A549 (cell line): ENCODE measurements at regions of chr17 and their contacts with region 1.

Region 1: GRCh38 chr17:17890773-17891759 is 54.3 kb upstream of the SREBF1 start:
- DNase-seq: peak; percentile 88 to 91
- ATAC-seq: peak; percentile 94 to 98
- H3K4me3 ChIP-seq: no peak overlapping the region
- H3K27ac ChIP-seq: peak overlapping the region in 1 of 2 experiments; percentile 26; a peak in 3 of 6 replicates
- H3K4me1 ChIP-seq: 0 out of 3 replicates have a peak, but pooled peaks cover under 1% of the 10 kb centered on the region
- CTCF ChIP-seq: peak; percentile 94
- EP300 ChIP-seq: no peak
- POLR2A ChIP-seq: no peak
- RAD21 ChIP-seq: peak; percentile 98 to 100

Region 2: GRCh38 chr17:17757391-17757791 is 133.7 kb before region 1 on chr17:
- CTCF ChIA-PET with region 1: no interaction called
- POLR2A ChIA-PET with region 1: no interaction called
- DNase-seq: no peak
- ATAC-seq: no peak
- H3K4me3 ChIP-seq: no peak overlapping the region
- H3K27ac ChIP-seq: no peak overlapping the region
- H3K4me1 ChIP-seq: peaks cover 14% of the 10 kb centered on the region
- CTCF ChIP-seq: no peak
- EP300 ChIP-seq: no peak
- POLR2A ChIP-seq: no peak
- RAD21 ChIP-seq: no peak

Region 3: GRCh38 chr17:17859909-17860765 is 30.9 kb before region 1 on chr17:
- CTCF ChIA-PET with region 1: interaction called, 18 read pairs
- POLR2A ChIA-PET with region 1: no interaction called
- DNase-seq: peak; percentile 72 to 97
- ATAC-seq: peak; percentile 94 to 97
- H3K4me3 ChIP-seq: no peak overlapping the region
- H3K27ac ChIP-seq: peak overlapping the region; percentile 15 to 61; a peak in 4 of 6 replicates
- H3K4me1 ChIP-seq: peaks cover 8% of the 10 kb centered on the region; the same call in 2 of the 3 replicates
- CTCF ChIP-seq: peak; percentile 99
- EP300 ChIP-seq: no peak
- POLR2A ChIP-seq: no peak
- RAD21 ChIP-seq: peak; percentile 98 to 99

Region 4: DNA sequence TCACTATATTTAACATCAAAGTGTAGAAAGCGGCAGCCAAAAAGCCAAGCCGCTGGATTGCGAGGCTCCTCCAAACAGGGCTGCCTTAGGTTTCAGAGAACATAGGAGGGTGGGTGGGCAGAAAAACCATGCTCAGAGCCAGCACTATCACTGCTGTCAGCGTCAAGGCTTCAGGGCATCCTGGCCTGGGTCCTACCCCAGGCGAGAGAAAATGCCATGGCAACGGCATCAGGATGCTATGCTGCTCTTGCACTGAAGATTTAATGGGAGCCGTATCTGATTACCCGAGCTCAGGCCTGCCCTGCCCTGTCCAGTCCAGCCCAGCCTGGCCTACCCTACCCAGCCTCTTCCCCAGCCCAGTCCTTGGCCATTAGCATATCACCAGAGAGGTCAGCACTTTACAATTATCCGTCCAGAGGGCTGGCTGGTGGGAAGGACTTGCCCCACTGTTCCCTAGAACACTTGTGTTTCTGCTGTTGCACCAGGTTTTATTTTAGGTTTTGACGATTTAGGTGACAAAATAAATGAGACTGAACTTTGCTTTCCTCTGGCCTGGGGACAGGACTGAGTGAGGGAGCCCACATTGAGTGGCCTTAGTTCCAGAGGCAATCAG is 20.0 kb after region 1 on chr17:
- CTCF ChIA-PET with region 1: interaction called, 313 read pairs
- POLR2A ChIA-PET with region 1: no interaction called
- DNase-seq: no peak
- ATAC-seq: no peak
- H3K4me3 ChIP-seq: no peak overlapping the region
- H3K27ac ChIP-seq: peak overlapping the region in 1 of 2 experiments; percentile 51; a peak in 3 of 6 replicates
- H3K4me1 ChIP-seq: peaks cover 24% of the 10 kb centered on the region
- CTCF ChIP-seq: no peak
- EP300 ChIP-seq: no peak
- POLR2A ChIP-seq: no peak
- RAD21 ChIP-seq: no peak

Region 5: DNA sequence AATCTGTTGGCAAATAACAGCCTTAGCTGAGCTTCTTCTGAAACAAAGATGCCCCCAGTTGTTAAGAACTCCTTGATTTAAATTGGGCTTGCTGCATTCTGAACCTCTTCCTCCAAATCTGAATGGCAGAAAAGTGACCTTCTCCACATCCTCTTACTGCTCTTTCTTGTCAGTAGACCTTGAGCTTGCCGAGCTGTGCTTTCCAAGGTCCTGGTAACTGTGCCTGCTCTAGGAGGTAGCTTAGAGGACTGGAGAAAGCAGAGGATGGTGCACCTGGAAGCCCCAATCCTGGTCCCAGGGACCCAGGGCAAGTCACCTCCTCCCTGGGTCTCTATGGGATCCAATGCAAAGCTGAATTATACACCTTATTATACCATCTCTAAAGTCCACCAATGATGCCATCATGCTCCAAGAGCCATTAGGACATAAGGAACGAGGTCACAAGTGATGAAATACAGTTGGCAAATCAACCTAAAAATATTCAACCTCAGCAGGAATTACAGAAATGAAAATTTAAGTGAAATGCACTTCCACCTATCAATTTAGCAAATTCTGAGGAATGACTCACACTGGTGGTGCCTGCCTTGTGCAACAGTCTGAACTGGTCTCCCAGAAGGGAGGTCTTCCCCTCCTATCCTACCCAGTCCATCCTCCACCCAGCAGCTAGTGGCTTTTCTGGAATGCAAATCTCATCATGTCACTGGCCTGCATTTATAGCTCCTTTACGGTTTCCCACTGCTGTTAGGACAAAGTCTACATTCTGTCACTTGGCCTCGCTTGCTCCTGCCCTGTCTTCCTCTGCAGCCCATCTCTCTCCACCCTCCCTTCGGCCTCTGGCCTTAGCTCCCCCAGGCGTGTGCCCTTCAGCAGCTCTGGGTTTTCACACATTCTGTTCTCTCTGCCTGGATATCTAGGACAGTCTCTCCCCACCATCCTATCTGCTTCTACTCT is 44.5 kb after region 1 on chr17:
- CTCF ChIA-PET with region 1: interaction called, 36 read pairs
- POLR2A ChIA-PET with region 1: no interaction called
- DNase-seq: peak; percentile 34 to 42
- ATAC-seq: peak; percentile 67 to 80; a peak in 5 of 6 replicates
- H3K4me3 ChIP-seq: no peak overlapping the region
- H3K27ac ChIP-seq: peak overlapping the region; percentile 13 to 71; a peak in 4 of 6 replicates
- H3K4me1 ChIP-seq: peaks cover 37% of the 10 kb centered on the region
- CTCF ChIP-seq: no peak
- EP300 ChIP-seq: no peak
- POLR2A ChIP-seq: no peak
- RAD21 ChIP-seq: no peak

Region 6: GRCh38 chr17:17972126-17972951 is 81.3 kb after region 1 on chr17 and contains the starts of genes DRC3 and TOM1L2:
- CTCF ChIA-PET with region 1: interaction called, 13 read pairs
- POLR2A ChIA-PET with region 1: no interaction called
- DNase-seq: peak; percentile 100
- ATAC-seq: peak; percentile 93 to 96
- H3K4me3 ChIP-seq: peak within 1 kb of the TSS; percentile 69
- H3K27ac ChIP-seq: peak within 1 kb of the TSS; percentile 68 to 88
- H3K4me1 ChIP-seq: peaks cover 25% of the 10 kb centered on the region
- CTCF ChIP-seq: no peak
- EP300 ChIP-seq: no peak
- POLR2A ChIP-seq: peak; percentile 57
- RAD21 ChIP-seq: no peak
- polyA plus RNA-seq, gene DRC3: 2.9 and 3.1 TPM in 2 replicates
- polyA plus RNA-seq, gene TOM1L2: 19.0 and 19.2 TPM in 2 replicates

Region 7: GRCh38 chr17:17999364-18000029 is 108.4 kb after region 1 on chr17:
- CTCF ChIA-PET with region 1: interaction called, 18 read pairs
- POLR2A ChIA-PET with region 1: no interaction called
- DNase-seq: no peak
- ATAC-seq: peak; percentile 45 to 52; a peak in 4 of 6 replicates
- H3K4me3 ChIP-seq: no peak overlapping the region
- H3K27ac ChIP-seq: no peak overlapping the region
- H3K4me1 ChIP-seq: peaks cover 2% of the 10 kb centered on the region; the same call in 1 of the 3 replicates
- CTCF ChIP-seq: no peak
- EP300 ChIP-seq: no peak
- POLR2A ChIP-seq: no peak
- RAD21 ChIP-seq: no peak

Region 8: DNA sequence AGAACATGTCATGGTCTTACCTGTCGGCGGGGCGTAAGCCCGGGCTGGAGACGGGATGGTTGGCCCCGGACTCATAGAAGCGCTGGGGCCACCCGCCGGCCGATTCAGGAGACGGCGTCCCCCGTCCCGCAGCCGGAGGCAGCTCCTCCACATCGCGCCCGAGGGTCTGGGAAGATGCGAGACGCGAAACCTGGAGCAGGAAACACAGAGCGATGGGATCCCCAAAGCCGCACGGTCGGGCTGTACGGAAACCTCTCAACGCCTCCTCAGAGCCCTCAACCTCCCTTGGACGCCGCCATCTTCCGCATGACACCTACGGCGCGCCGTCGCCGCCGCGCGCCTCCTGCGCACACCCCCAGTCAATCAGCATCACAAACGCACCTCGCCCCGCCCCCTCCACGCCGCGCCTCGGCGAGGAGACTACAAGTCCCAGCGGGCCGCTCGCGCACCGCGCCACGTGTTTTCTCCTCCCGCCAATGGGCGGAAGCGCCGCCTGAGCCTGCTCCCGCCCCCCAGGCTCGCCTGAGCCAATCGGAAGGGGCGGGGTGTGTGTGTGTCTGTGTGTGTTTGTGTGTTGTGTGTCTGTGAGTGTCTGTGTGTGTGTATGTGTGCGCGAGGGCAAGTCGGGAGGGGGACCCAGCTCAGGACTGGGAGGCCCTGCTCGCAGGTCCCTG is 147.9 kb after region 1 on chr17 and contains the starts of genes ATPAF2 and GID4:
- CTCF ChIA-PET with region 1: interaction called, 214 read pairs
- POLR2A ChIA-PET with region 1: no interaction called
- DNase-seq: peak; percentile 98 to 100
- ATAC-seq: peak; percentile 89 to 95
- H3K4me3 ChIP-seq: peak within 1 kb of the TSS; percentile 68
- H3K27ac ChIP-seq: peak within 1 kb of the TSS; percentile 81 to 92
- H3K4me1 ChIP-seq: peaks cover 31% of the 10 kb centered on the region
- CTCF ChIP-seq: peak; percentile 9; the same call in 2 of the 3 replicates
- EP300 ChIP-seq: no peak
- POLR2A ChIP-seq: peak; percentile 58
- RAD21 ChIP-seq: no peak
- polyA plus RNA-seq, gene ATPAF2: 20.0 and 22.3 TPM in 2 replicates
- polyA plus RNA-seq, gene GID4: 11.2 and 11.9 TPM in 2 replicates